Right cardiac atrium (tissue), 5 donors: ENCODE measurements at regions of chr21 and their contacts with region 1.

Region 1: GRCh38 chr21:36141513-36141925 is 6.6 kb downstream of the CBR3 start:
- DNase-seq: peak; percentile 58 to 70 (median 70)
- ATAC-seq: peak; percentile 85 to 86
- H3K4me3 ChIP-seq: no peak overlapping the region
- H3K27ac ChIP-seq: no peak overlapping the region
- H3K4me1 ChIP-seq: peaks cover under 1% of the 10 kb centered on the region
- H3K27me3 ChIP-seq: no peaks in the 10 kb centered on the region

Region 2: DNA sequence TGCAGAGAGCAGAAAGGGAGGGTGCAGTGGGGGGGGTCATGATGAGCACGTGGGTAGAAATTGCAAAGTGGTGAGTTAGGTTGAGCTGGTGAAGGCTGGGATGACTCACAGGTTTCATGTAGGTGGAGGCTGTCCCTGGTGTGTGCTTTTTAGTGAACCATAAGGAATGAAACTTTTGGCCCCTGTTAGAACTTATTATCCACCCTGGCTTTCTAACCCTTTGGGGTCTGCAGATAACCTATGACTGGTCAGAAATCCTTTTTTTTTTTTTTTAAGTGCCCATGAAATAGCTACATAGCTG is 62.0 kb after region 1 on chr21:
- intact Hi-C with region 1: loop called in 1 of 4 experiments (anchors 5 kb)
- DNase-seq: no peak
- ATAC-seq: peak; percentile 43 to 44
- H3K4me3 ChIP-seq: no peak overlapping the region
- H3K27ac ChIP-seq: no peak overlapping the region
- H3K4me1 ChIP-seq: no peaks in the 10 kb centered on the region
- H3K27me3 ChIP-seq: no peaks in the 10 kb centered on the region

Region 3: DNA sequence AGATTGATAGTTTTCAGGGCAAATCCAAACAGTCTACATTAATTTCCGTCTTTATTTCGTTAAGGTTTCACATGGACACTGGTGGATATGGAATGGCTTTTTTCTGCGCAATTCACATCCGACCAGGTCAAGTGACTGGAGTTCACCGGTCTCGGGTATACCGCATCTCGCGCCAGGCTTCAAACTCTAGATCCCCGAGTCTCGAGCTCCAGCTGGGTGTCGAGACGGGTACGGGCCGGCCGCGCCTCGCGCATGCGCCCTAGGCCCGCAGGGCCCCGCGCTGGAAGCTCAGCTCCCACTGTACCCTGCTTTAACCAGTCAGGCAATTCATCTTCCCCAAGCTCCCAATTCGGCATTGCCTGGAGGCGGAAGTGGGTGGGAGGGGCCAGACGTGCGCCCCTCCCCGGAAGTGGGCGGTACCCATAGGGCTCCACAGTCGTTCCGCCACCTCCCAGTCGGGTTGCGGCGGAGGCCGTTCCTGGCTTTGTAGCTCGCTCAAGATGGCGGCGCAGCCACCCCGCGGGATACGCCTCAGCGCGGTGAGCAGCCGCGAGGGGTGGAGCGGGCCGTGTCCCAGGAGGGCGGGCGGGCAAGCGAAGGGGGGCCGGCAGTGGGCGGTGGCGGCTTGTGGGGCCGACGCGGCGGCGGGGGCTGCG is 178.4 kb after region 1 on chr21 and contains the start of gene MORC3:
- intact Hi-C with region 1: loop called in 2 of 4 experiments (anchors 10 kb)
- DNase-seq: peak; percentile 98 to 99 (median 99)
- ATAC-seq: peak; percentile 99
- H3K4me3 ChIP-seq: peak within 1 kb of the TSS; percentile 75
- H3K27ac ChIP-seq: peak within 1 kb of the TSS; percentile 94
- H3K4me1 ChIP-seq: peaks cover 4% of the 10 kb centered on the region
- H3K27me3 ChIP-seq: no peaks in the 10 kb centered on the region
- total RNA-seq, gene MORC3: 20.6 to 23.1 (median 21.8) TPM

Region 4: DNA sequence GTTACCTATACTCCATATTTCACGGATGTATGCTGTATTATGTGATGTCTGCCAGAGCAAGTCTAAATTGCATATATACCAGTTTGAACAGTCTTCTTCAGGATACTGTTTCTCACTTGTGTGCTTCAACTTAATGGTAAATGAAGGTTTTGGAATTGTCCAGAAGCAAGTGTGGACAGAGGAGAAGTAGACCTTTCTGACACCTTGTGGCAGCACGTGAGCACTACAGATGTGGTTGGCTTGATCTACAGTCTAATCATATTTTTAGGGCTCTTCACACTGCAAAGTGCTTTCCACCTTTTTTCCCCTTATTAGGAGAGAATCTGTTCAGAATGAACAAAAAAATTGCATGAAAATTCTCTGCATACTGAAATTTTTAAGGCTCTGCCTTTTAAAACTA is 189.4 kb after region 1 on chr21:
- intact Hi-C with region 1: loop called in 3 of 4 experiments (anchors 5 to 10 kb)
- DNase-seq: peak in 2 of 3 donors; percentile 26 to 64
- ATAC-seq: peak; percentile 67 to 77
- H3K4me3 ChIP-seq: no peak overlapping the region
- H3K27ac ChIP-seq: no peak overlapping the region
- H3K4me1 ChIP-seq: peaks cover 4% of the 10 kb centered on the region
- H3K27me3 ChIP-seq: no peaks in the 10 kb centered on the region